ENCODE measurements at regions of chr1 and their contacts with region 1.

Region 1: DNA sequence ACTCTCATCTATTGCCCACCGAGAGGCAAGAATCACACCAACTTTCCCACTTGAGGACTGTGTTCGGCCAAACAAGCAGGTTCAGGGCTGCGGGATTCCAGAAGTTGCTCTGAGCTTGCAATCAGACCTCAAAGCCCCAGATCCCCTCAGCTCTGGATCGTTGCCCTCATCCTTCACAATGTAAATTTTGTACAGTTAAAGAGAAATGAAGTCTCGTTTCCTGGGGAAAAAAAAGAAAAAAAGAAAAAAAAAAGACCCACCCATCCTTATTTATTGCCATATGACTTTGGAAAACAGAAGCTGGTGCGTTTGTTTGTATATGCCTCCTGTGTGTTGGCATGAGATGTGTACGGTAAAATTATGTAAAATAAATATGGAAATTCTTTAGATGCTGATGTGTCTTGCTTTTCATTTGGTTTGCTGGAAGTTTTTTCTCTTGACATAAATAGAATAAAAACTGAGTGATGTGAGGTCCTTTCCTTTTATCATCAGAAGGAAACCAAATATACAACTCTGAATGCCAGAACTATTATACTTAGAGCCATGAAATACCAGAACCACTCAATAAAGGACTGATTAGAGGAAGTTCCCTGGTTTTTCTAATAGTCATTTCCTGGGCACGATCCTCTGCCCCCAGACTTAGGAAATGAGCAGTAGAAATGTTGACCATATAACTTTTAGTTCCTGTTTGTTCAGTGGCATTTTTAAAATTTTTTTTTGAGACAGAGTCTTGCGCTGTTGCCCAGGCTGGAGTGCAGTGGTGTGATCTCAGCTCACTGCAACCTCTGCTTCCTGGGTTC is 48.7 kb downstream of the LHX4 start:
- DNase-seq: no peak
- ATAC-seq: no peak
- H3K4me3 ChIP-seq: no peak overlapping the region
- H3K27ac ChIP-seq: no peak overlapping the region
- H3K4me1 ChIP-seq: no peaks in the 10 kb centered on the region
- H3K27me3 ChIP-seq: no peaks in the 10 kb centered on the region
- CTCF ChIP-seq: no peak

Region 2: GRCh38 chr1:180246579-180246978 is 32.2 kb before region 1 on chr1:
- CTCF ChIA-PET with region 1: no interaction called
- POLR2A ChIA-PET with region 1: interaction called, 10 read pairs
- in situ Hi-C with region 1: no loop called
- intact Hi-C with region 1: no loop called
- DNase-seq: no peak
- ATAC-seq: no peak
- H3K4me3 ChIP-seq: no peak overlapping the region
- H3K27ac ChIP-seq: no peak overlapping the region
- H3K4me1 ChIP-seq: no peaks in the 10 kb centered on the region
- H3K27me3 ChIP-seq: no peaks in the 10 kb centered on the region
- CTCF ChIP-seq: no peak

Measured in Panc1 (cell line).